ENCODE measurements at regions of chr12 and their contacts with region 1.

Region 1: GRCh38 chr12:118061011-118061875 is at the start of gene WSB2:
- DNase-seq: peak in 1 of 2 donors; percentile 88
- H3K4me3 ChIP-seq: peak within 1 kb of the TSS; percentile 75 to 86
- H3K27ac ChIP-seq: peak within 1 kb of the TSS; percentile 95 to 99
- H3K4me1 ChIP-seq: peaks cover 0 to 8% of the 10 kb centered on the region in 2 donors
- H3K27me3 ChIP-seq: no peaks in the 10 kb centered on the region
- CTCF ChIP-seq: no peak
- total RNA-seq, gene WSB2: 68.6 TPM

Region 2: DNA sequence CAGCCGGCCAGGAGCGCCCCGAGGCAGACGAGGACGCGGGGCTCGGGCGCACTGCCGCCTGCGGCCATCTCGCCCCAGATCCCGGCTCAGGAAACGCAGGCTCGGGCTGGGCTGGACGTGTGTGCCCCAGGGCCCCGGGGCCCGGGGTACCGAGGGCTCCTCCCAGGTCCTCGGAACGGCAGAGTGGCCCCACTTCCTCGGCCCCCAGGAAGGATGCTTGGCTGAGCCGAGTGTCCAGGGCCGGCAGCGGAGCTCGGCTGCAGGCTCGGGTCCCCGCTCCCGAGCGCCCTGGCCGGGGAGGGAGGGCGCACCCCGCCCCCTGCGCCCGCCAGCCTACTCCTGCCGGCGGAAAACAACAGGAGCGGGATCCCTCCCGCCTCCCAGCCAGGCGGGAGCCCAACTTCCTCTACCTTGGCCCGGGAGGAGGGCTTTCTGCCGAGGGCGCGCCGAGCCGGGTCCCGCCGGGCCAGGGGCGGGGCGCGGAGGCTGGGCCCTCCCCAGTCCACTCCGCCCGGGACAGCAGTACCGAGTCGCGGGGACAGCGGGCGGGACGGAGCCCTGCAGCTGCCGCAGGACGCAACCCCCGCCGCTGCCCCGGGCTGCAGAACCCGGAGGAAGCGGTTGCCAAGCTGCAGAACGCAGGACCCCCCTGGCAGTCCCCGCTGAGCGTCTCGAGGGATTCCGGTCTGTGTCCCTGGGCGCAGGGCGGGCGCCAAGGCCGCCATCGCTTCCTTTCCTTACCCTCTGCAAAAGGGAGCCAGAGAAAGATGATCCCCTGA is 42.5 kb after region 1 on chr12 and contains the start of gene VSIG10:
- intact Hi-C with region 1: loop called (anchors 2 kb)
- DNase-seq: peak; percentile 9 to 80
- H3K4me3 ChIP-seq: peak within 1 kb of the TSS; percentile 74 to 96
- H3K27ac ChIP-seq: peak within 1 kb of the TSS; percentile 70 to 74
- H3K4me1 ChIP-seq: no peaks in the 10 kb centered on the region
- H3K27me3 ChIP-seq: no peaks in the 10 kb centered on the region
- CTCF ChIP-seq: no peak
- total RNA-seq, gene VSIG10: 38.3 TPM

Region 3: GRCh38 chr12:118189741-118190191 is 128.5 kb after region 1 on chr12:
- intact Hi-C with region 1: loop called (anchors 5 kb)
- DNase-seq: peak in 1 of 2 donors; percentile 64
- H3K4me3 ChIP-seq: peak overlapping the region; percentile 34 to 54
- H3K27ac ChIP-seq: peak overlapping the region; percentile 64 to 78
- H3K4me1 ChIP-seq: peaks cover 0 to 12% of the 10 kb centered on the region in 2 donors
- H3K27me3 ChIP-seq: no peaks in the 10 kb centered on the region
- CTCF ChIP-seq: no peak